CD4-positive, alpha-beta T cell (primary cell): ENCODE measurements at regions of chr11 and their contacts with region 1.

Region 1: DNA sequence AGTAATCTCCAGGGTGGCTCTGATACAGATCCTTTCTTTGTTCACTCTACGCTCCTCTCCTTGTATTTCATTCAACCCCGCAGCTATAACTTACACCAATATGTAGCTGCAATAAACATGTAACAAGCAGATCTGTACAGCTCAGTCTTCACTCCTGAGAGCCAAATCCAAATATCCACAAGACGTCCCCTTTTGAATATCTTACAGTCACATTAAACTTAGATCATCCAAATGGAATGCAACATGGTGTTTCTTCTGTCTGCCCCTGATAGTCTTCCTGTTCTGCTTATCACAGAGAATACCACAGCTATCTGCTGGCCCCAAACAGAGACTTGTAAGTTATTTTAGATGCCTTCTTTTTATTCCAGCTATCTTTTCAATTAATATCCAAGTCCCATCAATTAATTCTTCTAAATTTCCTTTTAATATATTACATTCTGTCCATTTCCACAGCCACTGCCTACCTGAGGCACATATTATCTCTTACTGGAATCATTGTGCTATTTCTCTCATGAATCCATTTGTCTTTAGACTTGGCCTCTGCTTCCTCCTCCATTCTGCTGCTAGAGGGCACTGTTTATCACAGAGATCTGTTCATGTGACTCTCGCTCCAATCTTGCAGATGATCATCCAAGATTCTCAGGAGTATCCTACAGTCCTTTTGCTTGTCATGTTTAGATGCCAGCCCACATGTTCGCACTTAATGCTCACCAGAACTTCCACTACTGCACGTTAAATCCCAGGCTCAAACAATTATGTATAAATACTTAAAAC is 908.6 kb downstream of the NTM start:
- DNase-seq: peak in 1 of 14 experiments; percentile 1
- ATAC-seq: no peak
- H3K4me3 ChIP-seq: no peak overlapping the region
- H3K4me3 Mint-ChIP-seq: no peak overlapping the region
- H3K27ac ChIP-seq: no peak overlapping the region
- H3K27ac Mint-ChIP-seq: no peak overlapping the region
- H3K4me1 ChIP-seq: no peaks in the 10 kb centered on the region
- H3K4me1 Mint-ChIP-seq: no peaks in the 10 kb centered on the region
- H3K27me3 ChIP-seq: no peaks in the 10 kb centered on the region
- H3K27me3 Mint-ChIP-seq: peaks cover 4% of the 10 kb centered on the region
- CTCF ChIP-seq: no peak

Region 2: GRCh38 chr11:132941024-132941646 is 662.1 kb after region 1 on chr11:
- CTCF ChIA-PET with region 1: no interaction called
- POLR2A ChIA-PET with region 1: no interaction called
- intact Hi-C with region 1: loop called in 1 of 2 experiments (anchors 10 kb)
- DNase-seq: peak in 3 of 14 experiments; percentile 8 to 13 (median 10)
- ATAC-seq: no peak
- H3K4me3 ChIP-seq: no peak overlapping the region
- H3K4me3 Mint-ChIP-seq: no peak overlapping the region
- H3K27ac ChIP-seq: no peak overlapping the region
- H3K27ac Mint-ChIP-seq: no peak overlapping the region
- H3K4me1 ChIP-seq: no peaks in the 10 kb centered on the region
- H3K4me1 Mint-ChIP-seq: no peaks in the 10 kb centered on the region
- H3K27me3 ChIP-seq: peaks cover 13 to 23% of the 10 kb centered on the region in 2 experiments
- H3K27me3 Mint-ChIP-seq: peaks cover 52% of the 10 kb centered on the region
- CTCF ChIP-seq: peak; percentile 81